ENCODE measurements at regions of chr5 and their contacts with region 1.

Region 1: DNA sequence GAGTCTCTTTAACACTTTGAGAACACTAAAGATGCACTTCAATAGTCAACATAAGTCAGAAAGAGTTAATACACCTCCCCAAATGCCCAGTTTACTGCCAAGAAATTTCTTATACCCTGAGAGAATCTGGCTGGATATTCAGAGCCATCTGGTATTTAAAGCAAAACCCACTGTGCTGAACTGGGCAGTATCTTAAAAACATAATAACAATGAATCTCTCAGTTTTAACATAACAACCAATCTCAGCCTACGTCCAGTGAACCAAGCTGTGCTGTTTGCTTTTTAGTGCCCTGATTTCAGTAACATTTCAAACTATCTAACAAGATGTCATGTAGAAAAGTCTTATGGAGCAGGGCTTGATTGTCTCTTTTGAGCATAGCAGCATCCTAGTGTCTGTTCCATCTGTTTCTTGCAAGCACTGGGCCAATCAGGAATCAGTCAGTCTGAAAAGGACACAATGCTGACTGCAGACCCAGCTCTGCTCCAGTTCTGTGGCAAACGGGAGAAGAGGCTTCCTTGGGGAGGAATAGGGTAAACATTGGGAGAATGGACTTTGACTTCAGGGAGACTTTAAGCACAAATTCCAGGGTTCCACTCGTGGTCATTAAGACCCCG is 43.6 kb upstream of the FAM81B start:
- DNase-seq: no peak

Region 2: GRCh38 chr5:95398989-95399388 is 51.4 kb after region 1 on chr5:
- intact Hi-C with region 1: loop called (anchors 5 kb)
- DNase-seq: no peak